ENCODE measurements at regions of chrX and their contacts with region 1.

Region 1: GRCh38 chrX:16123222-16123786 is at the start of gene GRPR:
- DNase-seq: peak; percentile 58
- H3K4me3 ChIP-seq: peak within 1 kb of the TSS; percentile 19
- CTCF ChIP-seq: peak; percentile 64

Region 2: GRCh38 chrX:15973299-15973698 is 150.0 kb before region 1 on chrX:
- CTCF ChIA-PET with region 1: no interaction called
- POLR2A ChIA-PET with region 1: no interaction called
- DNase-seq: no peak
- H3K4me3 ChIP-seq: no peak overlapping the region
- CTCF ChIP-seq: no peak

Region 3: DNA sequence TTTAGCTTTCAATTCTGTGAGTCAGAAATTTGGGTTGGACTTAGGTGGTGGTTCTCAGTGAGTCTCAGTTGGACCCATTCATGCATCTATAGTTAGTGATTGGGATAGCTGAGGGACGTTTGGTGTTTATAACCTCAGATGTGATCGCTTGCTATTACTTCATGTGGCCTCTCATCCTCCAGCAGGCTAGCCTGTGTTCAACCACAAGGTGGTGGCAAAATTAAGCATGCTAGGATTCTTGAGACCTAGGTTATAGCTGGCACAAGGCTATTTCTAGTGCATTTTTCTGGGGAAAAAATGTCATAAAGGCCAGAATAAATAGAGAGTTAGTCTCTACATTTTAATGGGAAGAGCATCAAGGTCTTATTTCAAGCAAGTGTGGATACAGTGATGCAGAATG is 10.9 kb before region 1 on chrX:
- CTCF ChIA-PET with region 1: interaction called, 12 read pairs
- POLR2A ChIA-PET with region 1: no interaction called
- DNase-seq: no peak
- H3K4me3 ChIP-seq: no peak overlapping the region
- CTCF ChIP-seq: peak; percentile 18

Region 4: GRCh38 chrX:16212436-16212835 is 89.1 kb after region 1 on chrX:
- CTCF ChIA-PET with region 1: interaction called, 18 read pairs
- POLR2A ChIA-PET with region 1: no interaction called
- DNase-seq: no peak
- H3K4me3 ChIP-seq: no peak overlapping the region
- CTCF ChIP-seq: peak; percentile 17

Region 5: DNA sequence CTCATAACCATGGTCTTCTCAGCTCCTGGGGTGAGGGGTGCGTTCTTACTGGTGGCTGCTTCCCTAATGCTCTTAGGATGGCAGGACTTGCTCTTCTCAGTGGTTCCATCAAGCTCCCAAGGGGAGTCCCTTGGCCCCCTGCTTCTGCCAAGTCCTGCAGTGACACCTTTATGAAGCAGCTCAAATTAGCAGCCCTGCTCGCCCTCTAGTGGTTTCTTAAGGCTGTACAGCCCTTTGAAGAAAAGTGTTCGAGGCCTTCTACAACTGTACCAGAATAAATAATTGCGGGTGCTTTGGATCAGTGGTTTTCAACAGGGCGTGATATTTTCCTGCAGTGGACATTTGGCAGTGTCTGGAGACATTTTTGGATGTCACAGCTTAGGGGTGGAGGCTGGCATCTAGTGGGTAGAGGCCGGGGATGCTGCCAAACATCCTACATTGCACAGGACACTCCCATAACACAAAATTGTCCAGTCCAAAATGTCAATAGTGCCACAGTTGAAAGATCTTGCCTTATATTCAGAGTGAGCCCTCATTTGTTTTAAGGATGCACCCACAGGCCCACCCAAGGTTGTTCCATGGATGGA is 322.0 kb after region 1 on chrX:
- CTCF ChIA-PET with region 1: interaction called, 19 read pairs
- POLR2A ChIA-PET with region 1: no interaction called
- DNase-seq: no peak
- H3K4me3 ChIP-seq: no peak overlapping the region
- CTCF ChIP-seq: peak; percentile 49

Region 6: DNA sequence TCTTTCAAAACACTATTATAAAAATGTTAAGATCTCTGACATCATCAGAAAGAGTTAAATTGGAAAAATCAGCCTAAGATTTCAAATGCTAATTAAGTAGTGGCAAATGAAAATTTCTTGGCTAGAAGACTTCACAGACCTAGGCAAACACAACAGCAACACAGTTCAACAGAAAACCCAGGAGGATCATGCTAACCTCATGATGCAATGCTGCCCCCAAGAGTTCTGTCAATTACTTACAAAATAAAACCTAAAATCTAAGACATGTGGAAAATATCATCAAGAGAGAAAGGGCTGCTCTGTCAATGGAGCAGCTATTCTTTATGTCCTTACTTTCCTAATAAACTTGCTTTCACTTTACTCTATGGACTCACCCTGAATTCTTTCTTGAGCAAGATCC is 547.7 kb after region 1 on chrX:
- CTCF ChIA-PET with region 1: interaction called, 11 read pairs
- POLR2A ChIA-PET with region 1: no interaction called
- DNase-seq: no peak
- H3K4me3 ChIP-seq: no peak overlapping the region
- CTCF ChIP-seq: peak; percentile 12

Measured in AG04449 (cell line).